B cell (primary cell): ENCODE measurements at regions of chr5 and their contacts with region 1.

Region 1: GRCh38 chr5:87121304-87122150 is 146.2 kb upstream of the RASA1 start:
- DNase-seq: peak; percentile 36
- ATAC-seq: peak; percentile 86
- H3K4me3 ChIP-seq: peak overlapping the region in 1 of 5 experiments; percentile 43
- H3K4me3 Mint-ChIP-seq: peak overlapping the region; percentile 56
- H3K27ac ChIP-seq: peak overlapping the region in 1 of 2 donors; percentile 75
- H3K27ac Mint-ChIP-seq: peak overlapping the region; percentile 63
- H3K4me1 ChIP-seq: peaks cover 37 to 49% of the 10 kb centered on the region in 2 donors
- H3K4me1 Mint-ChIP-seq: peaks cover 49% of the 10 kb centered on the region
- H3K27me3 ChIP-seq: no peaks in the 10 kb centered on the region
- H3K27me3 Mint-ChIP-seq: no peaks in the 10 kb centered on the region
- CTCF ChIP-seq: no peak

Region 2: DNA sequence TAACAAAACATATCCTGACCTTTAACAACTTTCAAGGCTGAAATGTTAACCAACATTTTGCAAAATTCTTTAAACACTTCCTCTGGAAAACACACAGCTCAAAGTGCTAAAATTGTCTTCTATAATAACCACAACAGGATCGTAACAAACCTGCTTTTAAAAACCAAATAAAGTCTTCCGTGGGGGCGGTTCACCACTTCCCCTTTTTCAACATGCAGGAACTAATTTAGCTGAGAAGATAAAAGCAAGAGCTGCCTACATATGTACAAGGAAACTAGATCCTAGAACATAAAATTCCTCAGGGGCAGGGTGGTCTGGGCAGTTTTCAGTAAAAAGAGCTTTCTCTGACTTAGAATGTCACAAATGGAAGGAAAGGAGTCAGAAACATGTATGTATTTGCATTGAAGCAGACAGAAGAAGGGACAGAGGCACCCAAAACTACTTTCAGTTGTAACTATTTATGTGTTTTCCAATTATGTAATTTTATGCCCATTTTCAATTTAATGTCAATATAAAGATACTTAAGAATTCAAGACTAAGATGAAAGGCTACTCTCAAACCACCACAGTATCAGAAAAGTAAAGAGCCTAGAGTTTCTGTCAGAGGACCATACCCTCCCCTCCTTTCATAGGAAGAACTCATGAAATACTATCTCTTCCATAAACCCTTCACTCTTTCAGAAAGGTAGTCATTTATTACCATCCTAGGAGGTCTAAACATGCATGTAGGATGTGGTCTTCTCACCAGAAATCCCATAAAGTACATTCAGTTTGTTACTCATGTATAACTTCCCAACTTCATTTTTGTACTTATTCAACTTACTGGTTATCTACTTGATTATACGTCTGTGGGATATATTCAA is 39.8 kb before region 1 on chr5:
- CTCF ChIA-PET with region 1: no interaction called
- POLR2A ChIA-PET with region 1: no interaction called
- intact Hi-C with region 1: loop called (anchors 5 kb)
- DNase-seq: peak; percentile 76
- ATAC-seq: peak; percentile 90
- H3K4me3 ChIP-seq: peak overlapping the region in 4 of 5 experiments; percentile 1 to 43 (median 17)
- H3K4me3 Mint-ChIP-seq: peak overlapping the region; percentile 75
- H3K27ac ChIP-seq: peak overlapping the region; percentile 68 to 69
- H3K27ac Mint-ChIP-seq: peak overlapping the region; percentile 89
- H3K4me1 ChIP-seq: peaks cover 37 to 53% of the 10 kb centered on the region in 2 donors
- H3K4me1 Mint-ChIP-seq: peaks cover 53% of the 10 kb centered on the region
- H3K27me3 ChIP-seq: no peaks in the 10 kb centered on the region
- H3K27me3 Mint-ChIP-seq: no peaks in the 10 kb centered on the region
- CTCF ChIP-seq: no peak

Region 3: DNA sequence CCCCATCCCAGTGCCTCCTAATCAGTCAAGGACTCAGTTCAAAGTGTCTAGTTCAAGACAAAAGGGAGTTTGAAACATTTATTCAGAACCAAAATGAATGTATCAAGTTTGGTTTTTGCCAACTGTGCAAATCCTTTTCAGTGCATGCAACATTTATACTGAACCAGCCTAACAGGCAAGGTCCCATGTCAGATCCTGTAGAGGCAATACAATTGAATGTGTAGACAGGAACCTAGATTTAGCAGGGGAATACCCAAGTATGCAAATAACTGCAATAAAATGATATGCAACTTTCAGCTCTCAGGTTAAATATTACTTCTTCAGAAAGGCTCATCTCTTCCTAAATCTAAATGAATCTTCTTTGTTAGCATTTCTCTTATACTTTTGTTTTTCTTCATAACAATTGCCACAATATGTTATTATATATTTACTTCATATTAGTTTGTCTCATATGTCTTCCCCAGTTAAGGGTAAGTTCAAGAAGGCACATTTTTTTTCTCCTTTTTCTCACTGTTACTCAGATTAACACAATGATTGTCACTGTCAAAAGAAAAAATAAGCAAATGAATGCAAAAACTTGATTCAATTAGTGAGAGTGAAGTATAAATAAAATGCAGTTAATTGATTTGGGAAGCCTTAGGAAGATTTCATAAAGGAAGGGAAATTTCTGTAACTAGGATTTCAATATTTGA is 17.8 kb before region 1 on chr5:
- CTCF ChIA-PET with region 1: interaction called, 3 read pairs
- POLR2A ChIA-PET with region 1: no interaction called
- intact Hi-C with region 1: loop called (anchors 2 kb)
- DNase-seq: peak; percentile 63
- ATAC-seq: peak; percentile 93
- H3K4me3 ChIP-seq: peak overlapping the region in 1 of 5 experiments; percentile 27
- H3K4me3 Mint-ChIP-seq: peak overlapping the region; percentile 79
- H3K27ac ChIP-seq: peak overlapping the region in 1 of 2 donors; percentile 20
- H3K27ac Mint-ChIP-seq: peak overlapping the region; percentile 79
- H3K4me1 ChIP-seq: peaks cover 34 to 43% of the 10 kb centered on the region in 2 donors
- H3K4me1 Mint-ChIP-seq: peaks cover 45% of the 10 kb centered on the region
- H3K27me3 ChIP-seq: no peaks in the 10 kb centered on the region
- H3K27me3 Mint-ChIP-seq: no peaks in the 10 kb centered on the region
- CTCF ChIP-seq: no peak

Region 4: GRCh38 chr5:87138091-87138805 is 16.7 kb after region 1 on chr5:
- CTCF ChIA-PET with region 1: interaction called, 7 read pairs
- POLR2A ChIA-PET with region 1: no interaction called
- intact Hi-C with region 1: loop called (anchors 2 kb)
- DNase-seq: no peak
- ATAC-seq: no peak
- H3K4me3 ChIP-seq: no peak overlapping the region
- H3K4me3 Mint-ChIP-seq: no peak overlapping the region
- H3K27ac ChIP-seq: no peak overlapping the region
- H3K27ac Mint-ChIP-seq: no peak overlapping the region
- H3K4me1 ChIP-seq: peaks cover 0 to 3% of the 10 kb centered on the region in 2 donors
- H3K4me1 Mint-ChIP-seq: peaks cover 8% of the 10 kb centered on the region
- H3K27me3 ChIP-seq: no peaks in the 10 kb centered on the region
- H3K27me3 Mint-ChIP-seq: no peaks in the 10 kb centered on the region
- CTCF ChIP-seq: no peak

Region 5: GRCh38 chr5:87182649-87183048 is 61.1 kb after region 1 on chr5:
- CTCF ChIA-PET with region 1: no interaction called
- POLR2A ChIA-PET with region 1: no interaction called
- intact Hi-C with region 1: no loop called
- DNase-seq: no peak
- ATAC-seq: no peak
- H3K4me3 ChIP-seq: no peak overlapping the region
- H3K4me3 Mint-ChIP-seq: no peak overlapping the region
- H3K27ac ChIP-seq: no peak overlapping the region
- H3K27ac Mint-ChIP-seq: no peak overlapping the region
- H3K4me1 ChIP-seq: peaks cover 5 to 7% of the 10 kb centered on the region in 2 donors
- H3K4me1 Mint-ChIP-seq: peaks cover 7% of the 10 kb centered on the region
- H3K27me3 ChIP-seq: no peaks in the 10 kb centered on the region
- H3K27me3 Mint-ChIP-seq: no peaks in the 10 kb centered on the region
- CTCF ChIP-seq: no peak